Natural killer cell (primary cell): ENCODE measurements at regions of chr19 and their contacts with region 1.

Region 1: GRCh38 chr19:45469132-45469944 is 1.5 kb downstream of the FOSB start:
- DNase-seq: peak; percentile 91 to 97
- ATAC-seq: peak; percentile 51 to 86 (median 69)
- H3K4me3 ChIP-seq: peak overlapping the region; percentile 87
- H3K4me3 Mint-ChIP-seq: peak overlapping the region; percentile 96
- H3K27ac ChIP-seq: peak overlapping the region; percentile 100
- H3K27ac Mint-ChIP-seq: peak overlapping the region; percentile 87 to 99
- H3K4me1 ChIP-seq: peaks cover 40% of the 10 kb centered on the region
- H3K4me1 Mint-ChIP-seq: peaks cover 36 to 78% of the 10 kb centered on the region in 2 donors
- H3K27me3 ChIP-seq: peaks cover 6% of the 10 kb centered on the region
- H3K27me3 Mint-ChIP-seq: peaks cover 8 to 23% of the 10 kb centered on the region in 2 donors
- CTCF ChIP-seq: no peak

Region 2: DNA sequence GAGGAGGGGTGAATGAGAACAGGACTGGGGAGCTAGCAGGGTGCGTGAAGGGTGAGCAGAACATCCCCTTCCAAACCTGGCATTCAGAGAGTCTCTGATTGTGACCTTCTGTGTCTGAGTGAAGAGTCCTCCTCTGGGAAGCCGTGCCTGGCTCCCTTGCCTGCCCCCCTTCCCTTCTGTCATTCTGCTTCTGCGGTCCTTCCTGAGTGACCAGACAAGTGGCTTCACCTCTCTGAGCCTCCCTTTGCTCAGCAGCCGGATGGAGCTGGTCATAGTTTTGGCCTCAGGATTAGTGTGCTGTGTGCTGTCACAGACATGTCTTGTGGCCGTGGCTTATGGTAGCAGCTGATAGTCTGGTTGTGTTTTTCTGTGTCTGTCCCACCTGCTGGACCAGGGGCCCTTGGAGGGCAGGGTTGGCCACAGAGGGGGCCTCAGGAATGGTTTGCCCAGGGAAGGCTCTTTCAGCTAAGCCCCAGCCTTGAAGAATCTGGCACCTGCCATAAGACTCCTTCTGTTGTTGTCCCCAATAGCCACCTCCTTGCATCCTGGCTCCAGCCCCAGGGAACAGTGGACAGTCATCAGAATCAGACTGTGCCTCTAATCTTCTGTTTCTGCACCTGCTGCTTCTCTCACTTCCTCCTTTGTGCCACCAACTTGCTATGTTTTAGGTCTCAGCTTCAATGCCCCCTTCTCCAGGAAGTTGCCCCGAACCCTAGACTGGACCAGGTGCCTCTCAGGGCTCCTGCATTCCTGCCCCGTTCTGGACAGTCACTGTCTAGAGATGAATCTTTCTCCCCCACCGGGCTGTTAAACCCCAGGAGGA is 508.2 kb before region 1 on chr19:
- intact Hi-C with region 1: no loop called
- DNase-seq: no peak
- ATAC-seq: no peak
- H3K4me3 ChIP-seq: no peak overlapping the region
- H3K4me3 Mint-ChIP-seq: no peak overlapping the region
- H3K27ac ChIP-seq: peak overlapping the region; percentile 44
- H3K27ac Mint-ChIP-seq: peak overlapping the region in 1 of 2 donors; percentile 0
- H3K4me1 ChIP-seq: peaks cover 29% of the 10 kb centered on the region
- H3K4me1 Mint-ChIP-seq: peaks cover 25 to 34% of the 10 kb centered on the region in 2 donors
- H3K27me3 ChIP-seq: no peaks in the 10 kb centered on the region
- H3K27me3 Mint-ChIP-seq: no peaks in the 10 kb centered on the region
- CTCF ChIP-seq: no peak

Region 3: DNA sequence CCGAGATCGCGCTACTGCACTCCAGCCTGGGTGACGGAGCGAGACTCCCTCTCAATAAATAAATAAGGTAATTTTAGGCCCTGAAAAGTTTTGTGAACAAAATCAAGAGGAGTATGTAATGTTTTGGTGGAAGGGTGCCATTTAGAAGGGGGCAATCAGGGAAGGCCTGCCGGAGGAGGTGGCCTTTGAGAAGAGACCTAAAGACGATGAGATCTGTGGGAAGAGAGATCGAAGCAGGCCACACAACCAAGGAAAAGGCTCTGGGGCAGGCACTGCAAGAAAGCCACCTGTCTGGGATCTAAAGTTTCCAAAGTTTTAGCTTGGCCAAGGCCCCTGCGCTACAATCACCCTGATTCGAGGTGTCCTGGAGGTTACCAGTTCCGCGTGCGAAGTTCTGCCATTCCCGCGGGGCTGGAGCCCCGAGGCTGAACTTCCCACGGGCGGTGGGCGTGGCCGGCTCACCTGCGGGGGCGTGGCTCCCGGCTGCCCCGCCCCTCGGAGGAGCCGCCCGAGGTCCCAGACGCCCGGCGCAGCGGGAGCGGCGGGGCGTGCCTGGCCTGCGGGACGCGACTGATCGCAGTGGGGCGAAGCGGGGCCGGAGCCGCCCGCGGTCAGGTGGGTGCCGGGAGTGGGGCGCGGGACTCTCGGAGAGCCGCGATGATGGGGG is 129.0 kb before region 1 on chr19 and contains the start of gene KLC3:
- intact Hi-C with region 1: no loop called
- DNase-seq: peak in 1 of 2 donors; percentile 66
- ATAC-seq: peak in 1 of 3 donors; percentile 23
- H3K4me3 ChIP-seq: no peak within 1 kb of the TSS
- H3K4me3 Mint-ChIP-seq: peak within 1 kb of the TSS; percentile 77
- H3K27ac ChIP-seq: no peak within 1 kb of the TSS
- H3K27ac Mint-ChIP-seq: no peak within 1 kb of the TSS
- H3K4me1 ChIP-seq: peaks cover 10% of the 10 kb centered on the region
- H3K4me1 Mint-ChIP-seq: peaks cover 10 to 12% of the 10 kb centered on the region in 2 donors
- H3K27me3 ChIP-seq: peaks cover 9% of the 10 kb centered on the region
- H3K27me3 Mint-ChIP-seq: peaks cover 8 to 18% of the 10 kb centered on the region in 2 donors
- CTCF ChIP-seq: no peak
- total RNA-seq, gene KLC3: not detected

Region 4: DNA sequence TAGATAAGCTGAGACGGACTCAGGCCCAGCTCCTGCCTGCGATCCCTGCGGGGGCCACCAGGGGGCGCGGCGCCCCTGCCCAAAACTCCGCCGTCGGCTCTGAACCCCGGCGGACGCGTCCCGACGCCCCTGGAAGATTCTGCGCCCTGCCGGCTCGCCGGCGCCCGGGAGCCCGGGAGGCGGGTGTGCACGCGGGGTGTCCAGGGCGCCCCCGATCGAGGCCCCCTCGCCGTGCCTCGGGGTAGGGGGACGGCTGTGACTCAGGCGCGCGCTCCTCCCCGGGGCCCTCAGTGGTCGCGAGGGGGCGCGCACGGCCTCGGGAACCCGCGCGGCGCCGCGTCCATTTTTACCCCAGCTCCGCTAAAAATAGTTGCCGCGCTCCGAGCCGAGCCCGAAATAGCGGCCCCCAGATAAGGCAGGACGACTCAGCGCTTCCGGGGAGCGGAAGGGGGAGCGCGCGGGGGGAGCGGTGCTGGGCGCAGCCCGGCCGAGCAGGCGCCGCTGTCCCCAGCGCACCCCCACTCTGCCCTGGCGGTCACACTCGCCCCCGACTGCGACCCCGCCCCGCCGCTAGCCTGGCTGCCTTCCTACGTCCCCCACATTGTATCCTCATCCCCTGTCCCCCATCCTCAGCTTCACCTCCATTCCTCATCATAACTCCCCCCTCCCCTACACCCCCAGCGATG is 29.6 kb before region 1 on chr19:
- intact Hi-C with region 1: no loop called
- DNase-seq: peak; percentile 92 to 93
- ATAC-seq: peak; percentile 67 to 82 (median 72)
- H3K4me3 ChIP-seq: peak overlapping the region; percentile 22
- H3K4me3 Mint-ChIP-seq: peak overlapping the region; percentile 81
- H3K27ac ChIP-seq: peak overlapping the region; percentile 70
- H3K27ac Mint-ChIP-seq: peak overlapping the region; percentile 86 to 92
- H3K4me1 ChIP-seq: peaks cover 43% of the 10 kb centered on the region
- H3K4me1 Mint-ChIP-seq: peaks cover 23 to 38% of the 10 kb centered on the region in 2 donors
- H3K27me3 ChIP-seq: no peaks in the 10 kb centered on the region
- H3K27me3 Mint-ChIP-seq: no peaks in the 10 kb centered on the region
- CTCF ChIP-seq: peak; percentile 100

Region 5: GRCh38 chr19:45450012-45450333 is 19.4 kb before region 1 on chr19:
- intact Hi-C with region 1: loop called (anchors 1 kb)
- DNase-seq: peak in 1 of 2 donors; percentile 81
- ATAC-seq: peak; percentile 52 to 78 (median 62)
- H3K4me3 ChIP-seq: peak overlapping the region; percentile 48
- H3K4me3 Mint-ChIP-seq: peak overlapping the region; percentile 98
- H3K27ac ChIP-seq: peak overlapping the region; percentile 93
- H3K27ac Mint-ChIP-seq: peak overlapping the region; percentile 99 to 100
- H3K4me1 ChIP-seq: peaks cover 63% of the 10 kb centered on the region
- H3K4me1 Mint-ChIP-seq: peaks cover 65 to 74% of the 10 kb centered on the region in 2 donors
- H3K27me3 ChIP-seq: no peaks in the 10 kb centered on the region
- H3K27me3 Mint-ChIP-seq: no peaks in the 10 kb centered on the region
- CTCF ChIP-seq: no peak

Region 6: GRCh38 chr19:45455707-45456499 is 13.4 kb before region 1 on chr19:
- intact Hi-C with region 1: loop called (anchors 1 kb)
- DNase-seq: peak; percentile 84 to 88
- ATAC-seq: peak; percentile 60 to 77 (median 72)
- H3K4me3 ChIP-seq: no peak overlapping the region
- H3K4me3 Mint-ChIP-seq: peak overlapping the region; percentile 47
- H3K27ac ChIP-seq: peak overlapping the region; percentile 74
- H3K27ac Mint-ChIP-seq: peak overlapping the region; percentile 92 to 98
- H3K4me1 ChIP-seq: peaks cover 40% of the 10 kb centered on the region
- H3K4me1 Mint-ChIP-seq: peaks cover 42 to 52% of the 10 kb centered on the region in 2 donors
- H3K27me3 ChIP-seq: no peaks in the 10 kb centered on the region
- H3K27me3 Mint-ChIP-seq: peaks cover 0 to 4% of the 10 kb centered on the region in 2 donors
- CTCF ChIP-seq: no peak